Heart right ventricle (tissue), 16 donors: ENCODE measurements at regions of chr9 and their contacts with region 1.

Region 1: GRCh38 chr9:132901856-132902831 is 23.4 kb downstream of the SPACA9 start:
- DNase-seq: peak; percentile 36 to 60
- ATAC-seq: peak; percentile 38 to 78 (median 66)
- H3K4me3 ChIP-seq: no peak overlapping the region
- H3K27ac ChIP-seq: peak overlapping the region in 1 of 10 donors; percentile 11
- H3K4me1 ChIP-seq: peaks cover 0 to 3% (median 2%) of the 10 kb centered on the region in 9 donors
- H3K27me3 ChIP-seq: no peaks in the 10 kb centered on the region
- CTCF ChIP-seq: peak; percentile 76 to 94 (median 90)

Region 2: GRCh38 chr9:132823370-132824145 is 78.6 kb before region 1 on chr9:
- intact Hi-C with region 1: loop called in 1 of 10 experiments (anchors 5 kb)
- DNase-seq: no peak
- ATAC-seq: peak in 2 of 8 donors; percentile 33 to 55
- H3K4me3 ChIP-seq: no peak overlapping the region
- H3K27ac ChIP-seq: no peak overlapping the region
- H3K4me1 ChIP-seq: peaks cover 0 to 6% (median 0%) of the 10 kb centered on the region in 9 donors
- H3K27me3 ChIP-seq: peaks cover 0 to 6% (median 0%) of the 10 kb centered on the region in 7 donors
- CTCF ChIP-seq: no peak

Region 3: DNA sequence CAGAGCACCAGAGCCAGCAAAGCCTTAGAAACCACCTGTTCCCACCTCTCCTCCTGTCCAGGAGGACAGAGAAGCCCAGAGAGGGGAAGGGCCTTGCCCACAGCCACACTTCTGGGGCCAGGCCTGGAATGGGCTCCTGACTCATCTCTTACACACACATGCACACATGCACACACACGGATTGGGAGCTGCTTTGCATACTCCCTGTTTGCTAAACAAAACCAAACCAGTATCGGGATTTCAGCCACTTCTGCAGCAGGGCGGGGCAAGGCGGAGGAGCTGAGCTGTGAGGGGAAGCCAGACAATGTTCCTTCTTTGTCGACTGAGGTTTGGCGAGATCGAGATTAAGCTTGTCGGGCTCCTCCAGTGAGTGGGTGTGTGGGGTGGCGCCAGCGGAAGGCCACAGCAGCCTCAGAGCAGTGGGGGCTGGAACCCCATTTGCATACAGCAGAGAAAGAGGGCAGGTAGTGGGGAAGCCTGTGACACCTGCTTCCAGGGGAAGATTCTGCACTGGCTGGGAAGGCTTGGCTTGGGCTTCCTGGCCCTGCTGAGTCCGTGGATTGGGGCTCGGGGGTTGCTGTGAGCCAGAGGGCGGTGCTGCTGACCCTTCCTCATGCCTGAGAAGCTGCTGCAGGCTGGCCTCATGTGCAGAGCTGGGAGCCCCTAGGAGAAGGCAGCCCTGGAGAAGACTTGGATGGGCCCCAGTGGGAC is 92.4 kb after region 1 on chr9:
- intact Hi-C with region 1: no loop called
- DNase-seq: no peak
- ATAC-seq: no peak
- H3K4me3 ChIP-seq: no peak overlapping the region
- H3K27ac ChIP-seq: no peak overlapping the region
- H3K4me1 ChIP-seq: peaks cover 0 to 5% (median 0%) of the 10 kb centered on the region in 9 donors
- H3K27me3 ChIP-seq: peaks cover 0 to 69% (median 43%) of the 10 kb centered on the region in 7 donors
- CTCF ChIP-seq: no peak

Region 4: GRCh38 chr9:133994353-133995011 is 1092.3 kb after region 1 on chr9:
- intact Hi-C with region 1: no loop called
- DNase-seq: peak; percentile 78 to 87
- ATAC-seq: peak; percentile 47 to 88 (median 75)
- H3K4me3 ChIP-seq: no peak overlapping the region
- H3K27ac ChIP-seq: no peak overlapping the region
- H3K4me1 ChIP-seq: peaks cover 8 to 34% (median 23%) of the 10 kb centered on the region in 9 donors
- H3K27me3 ChIP-seq: peaks cover 0 to 17% (median 3%) of the 10 kb centered on the region in 7 donors
- CTCF ChIP-seq: peak; percentile 97 to 100 (median 99)